IMR-90 (cell line): ENCODE measurements at regions of chr7 and their contacts with region 1.

Region 1: DNA sequence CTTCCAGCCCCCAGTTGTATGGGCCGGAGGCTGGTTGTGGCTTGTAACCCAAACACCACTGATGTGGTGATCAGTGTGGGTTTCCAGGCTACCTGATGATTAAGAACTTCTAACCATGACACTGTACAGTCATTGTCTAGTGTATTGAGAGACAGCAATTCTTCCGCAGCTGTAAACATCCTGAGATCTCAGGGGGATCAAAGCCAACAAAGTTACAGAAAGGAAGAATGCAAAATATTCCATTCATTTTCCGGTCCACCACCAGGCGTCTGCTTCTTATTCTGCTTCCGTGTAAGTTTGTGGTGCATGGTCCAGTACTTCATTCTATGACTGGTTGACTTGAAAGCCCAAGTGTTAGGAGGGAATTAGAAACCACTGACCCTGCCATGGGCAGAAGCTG is 10.3 kb upstream of the GLI3 start:
- DNase-seq: peak; percentile 74
- ATAC-seq: peak; percentile 80
- H3K4me3 ChIP-seq: no peak overlapping the region
- H3K27ac ChIP-seq: no peak overlapping the region
- H3K4me1 ChIP-seq: peaks cover 6% of the 10 kb centered on the region
- H3K27me3 ChIP-seq: no peaks in the 10 kb centered on the region
- CTCF ChIP-seq: peak; percentile 23; the same call in 1 of the 2 replicates
- POLR2A ChIP-seq: no peak
- RAD21 ChIP-seq: no peak

Region 2: DNA sequence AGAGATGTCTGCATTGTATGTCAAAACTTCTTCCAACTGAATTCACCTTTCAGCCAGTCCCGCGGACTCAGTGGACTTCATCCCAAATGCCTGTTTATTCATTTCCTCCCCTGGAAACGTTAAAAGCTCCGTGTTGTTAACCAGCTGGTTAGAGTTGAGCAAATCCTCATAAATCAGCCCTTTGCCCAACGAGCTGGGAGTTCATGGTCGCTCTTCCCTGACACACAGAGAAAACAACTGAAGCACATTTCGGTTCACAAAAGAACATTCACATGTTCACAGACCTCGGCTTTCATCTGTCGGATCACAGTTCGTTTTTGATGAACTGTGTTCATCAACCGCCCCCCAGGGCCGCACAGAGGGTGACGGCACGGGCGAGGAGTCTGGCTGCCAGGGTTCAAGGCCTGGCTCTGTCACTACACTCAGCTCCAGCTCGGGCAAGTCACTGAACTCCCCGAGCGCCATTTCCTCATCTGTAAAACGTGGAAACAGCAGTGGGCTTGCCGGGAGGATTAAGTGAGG is 72.8 kb before region 1 on chr7:
- CTCF ChIA-PET with region 1: no interaction called
- POLR2A ChIA-PET with region 1: no interaction called
- dilution Hi-C with region 1: no loop called
- in situ Hi-C with region 1: no loop called
- intact Hi-C with region 1: no loop called
- DNase-seq: peak; percentile 23
- ATAC-seq: no peak
- H3K4me3 ChIP-seq: no peak overlapping the region
- H3K27ac ChIP-seq: no peak overlapping the region
- H3K4me1 ChIP-seq: peaks cover 8% of the 10 kb centered on the region
- H3K27me3 ChIP-seq: no peaks in the 10 kb centered on the region
- CTCF ChIP-seq: no peak
- POLR2A ChIP-seq: no peak
- RAD21 ChIP-seq: no peak

Region 3: DNA sequence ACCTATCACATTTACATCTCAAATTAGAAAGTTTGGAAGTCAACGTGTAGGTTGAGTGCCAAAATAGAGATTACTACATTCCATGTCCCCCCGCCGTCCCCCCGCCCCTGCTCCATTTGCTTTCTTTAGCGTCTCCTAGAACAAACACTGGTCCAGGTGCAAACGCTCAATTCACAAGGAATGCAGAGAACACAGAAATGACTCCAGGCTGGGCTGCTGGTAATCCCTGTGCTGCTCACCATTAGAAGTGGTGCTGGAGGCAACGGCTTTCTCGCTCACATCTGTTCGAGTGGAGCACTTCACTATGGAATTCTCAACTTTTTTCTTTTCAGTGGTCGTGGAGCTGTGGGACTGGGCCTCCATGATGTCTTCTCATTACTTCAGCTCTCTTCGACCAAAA is 24.4 kb before region 1 on chr7:
- CTCF ChIA-PET with region 1: no interaction called
- POLR2A ChIA-PET with region 1: interaction called, 11 read pairs
- dilution Hi-C with region 1: no loop called
- in situ Hi-C with region 1: no loop called
- intact Hi-C with region 1: no loop called
- DNase-seq: no peak
- ATAC-seq: no peak
- H3K4me3 ChIP-seq: no peak overlapping the region
- H3K27ac ChIP-seq: no peak overlapping the region
- H3K4me1 ChIP-seq: peaks cover 3% of the 10 kb centered on the region; the same call in 1 of the 2 replicates
- H3K27me3 ChIP-seq: no peaks in the 10 kb centered on the region
- CTCF ChIP-seq: no peak
- POLR2A ChIP-seq: no peak
- RAD21 ChIP-seq: no peak

Region 4: GRCh38 chr7:42426164-42426563 is 178.9 kb after region 1 on chr7:
- CTCF ChIA-PET with region 1: no interaction called
- POLR2A ChIA-PET with region 1: no interaction called
- dilution Hi-C with region 1: no loop called
- in situ Hi-C with region 1: no loop called
- intact Hi-C with region 1: no loop called
- DNase-seq: peak; percentile 21
- ATAC-seq: no peak
- H3K4me3 ChIP-seq: no peak overlapping the region
- H3K27ac ChIP-seq: no peak overlapping the region
- H3K4me1 ChIP-seq: no peaks in the 10 kb centered on the region
- H3K27me3 ChIP-seq: no peaks in the 10 kb centered on the region; the same call in 1 of the 2 replicates
- CTCF ChIP-seq: no peak
- POLR2A ChIP-seq: no peak
- RAD21 ChIP-seq: no peak

Region 5: GRCh38 chr7:42560896-42561295 is 313.6 kb after region 1 on chr7:
- CTCF ChIA-PET with region 1: no interaction called
- POLR2A ChIA-PET with region 1: no interaction called
- dilution Hi-C with region 1: no loop called
- in situ Hi-C with region 1: no loop called
- intact Hi-C with region 1: no loop called
- DNase-seq: no peak
- ATAC-seq: no peak
- H3K4me3 ChIP-seq: no peak overlapping the region
- H3K27ac ChIP-seq: no peak overlapping the region
- H3K4me1 ChIP-seq: no peaks in the 10 kb centered on the region
- H3K27me3 ChIP-seq: no peaks in the 10 kb centered on the region
- CTCF ChIP-seq: no peak
- POLR2A ChIP-seq: no peak
- RAD21 ChIP-seq: no peak